Esophagus muscularis mucosa (tissue), 4 donors: ENCODE measurements at regions of chr7 and their contacts with region 1.

Region 1: DNA sequence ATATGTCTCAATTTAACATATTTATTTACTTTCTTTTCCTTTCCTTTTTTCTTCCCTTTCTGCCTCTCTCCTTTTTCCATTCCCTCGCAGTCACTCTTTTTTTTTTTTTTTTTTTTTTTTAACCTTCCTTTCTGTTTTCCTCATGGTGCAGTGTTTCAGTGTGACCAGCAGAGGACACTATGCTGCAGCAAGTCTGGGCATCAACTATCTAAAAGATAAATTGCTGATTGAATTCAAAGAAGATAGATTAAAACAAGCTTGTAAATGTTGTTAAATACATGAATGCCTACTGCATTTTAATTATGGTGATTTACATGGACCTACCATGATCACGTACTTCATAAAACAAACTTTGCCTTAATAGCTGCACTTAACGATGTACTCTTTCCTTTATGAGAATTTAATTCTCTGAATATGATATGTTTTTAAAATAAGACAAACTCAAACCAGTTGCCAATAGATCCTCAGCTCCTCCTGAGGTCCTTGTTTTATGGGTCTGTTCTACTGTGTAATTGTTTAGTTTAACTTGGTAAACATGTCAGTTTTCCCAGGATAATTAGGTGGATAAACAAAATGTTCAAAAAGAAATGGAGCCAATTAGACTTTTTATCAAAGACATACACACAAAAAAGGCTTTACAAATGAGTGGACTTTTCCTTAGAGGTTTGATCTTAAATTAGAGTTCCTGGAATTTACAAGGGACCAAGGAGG is 101.0 kb upstream of the AGR3 start:
- DNase-seq: no peak
- H3K4me3 ChIP-seq: peak overlapping the region in 1 of 4 donors; percentile 10
- H3K27ac ChIP-seq: no peak overlapping the region
- H3K4me1 ChIP-seq: peaks cover 0 to 13% (median 8%) of the 10 kb centered on the region in 4 donors
- H3K27me3 ChIP-seq: no peaks in the 10 kb centered on the region
- CTCF ChIP-seq: peak; percentile 79 to 93 (median 85)
- EP300 ChIP-seq: no peak
- POLR2A ChIP-seq: no peak

Region 2: GRCh38 chr7:17298207-17298839 is 315.5 kb after region 1 on chr7 and contains the start of gene AHR:
- intact Hi-C with region 1: loop called (anchors 5 kb)
- DNase-seq: peak; percentile 99
- H3K4me3 ChIP-seq: peak within 1 kb of the TSS; percentile 90 to 98 (median 93)
- H3K27ac ChIP-seq: peak within 1 kb of the TSS; percentile 92 to 97 (median 94)
- H3K4me1 ChIP-seq: peaks cover 11 to 27% (median 19%) of the 10 kb centered on the region in 4 donors
- H3K27me3 ChIP-seq: peaks cover 0 to 4% (median 0%) of the 10 kb centered on the region in 4 donors
- CTCF ChIP-seq: no peak
- EP300 ChIP-seq: no peak
- POLR2A ChIP-seq: peak; percentile 87
- total RNA-seq, gene AHR: 67.3 to 111 (median 77.8) TPM

Region 3: GRCh38 chr7:17530741-17531417 is 548.1 kb after region 1 on chr7:
- intact Hi-C with region 1: loop called (anchors 5 kb)
- DNase-seq: no peak
- H3K4me3 ChIP-seq: no peak overlapping the region
- H3K27ac ChIP-seq: no peak overlapping the region
- H3K4me1 ChIP-seq: peaks cover 0 to 4% (median 2%) of the 10 kb centered on the region in 4 donors
- H3K27me3 ChIP-seq: no peaks in the 10 kb centered on the region
- CTCF ChIP-seq: peak; percentile 14 to 40 (median 21)
- EP300 ChIP-seq: no peak
- POLR2A ChIP-seq: no peak

Region 4: DNA sequence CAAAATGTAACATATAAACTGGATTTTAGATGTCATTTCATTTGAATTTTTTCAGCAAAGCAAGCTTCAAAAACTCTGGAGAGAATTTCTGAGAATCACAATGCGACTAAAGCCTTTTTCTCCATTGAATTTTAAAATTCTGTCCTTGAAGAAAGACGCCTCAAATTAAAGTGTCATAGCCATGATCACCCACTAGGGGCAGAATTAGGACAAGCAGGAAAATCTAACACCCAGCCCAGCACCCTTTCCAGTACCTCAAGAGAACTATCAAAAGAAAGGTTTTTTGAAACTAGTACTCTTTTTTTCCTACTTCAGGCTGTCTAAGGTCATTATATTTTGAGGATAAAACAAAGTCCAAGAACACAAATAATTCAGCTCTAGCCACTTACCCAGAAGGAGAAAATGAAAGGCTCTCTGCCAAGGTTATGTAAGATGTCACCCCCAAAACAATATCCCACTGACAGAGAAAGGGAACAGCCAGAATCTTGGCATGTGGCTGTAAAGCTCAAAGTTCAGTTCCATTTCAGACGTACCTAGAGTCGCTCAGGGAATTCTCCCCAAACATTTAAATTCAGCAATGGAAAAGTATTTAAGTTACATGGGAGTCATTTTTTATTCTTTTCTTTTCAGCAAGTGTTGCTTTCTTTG is 658.1 kb after region 1 on chr7:
- intact Hi-C with region 1: loop called (anchors 5 kb)
- DNase-seq: no peak
- H3K4me3 ChIP-seq: no peak overlapping the region
- H3K27ac ChIP-seq: no peak overlapping the region
- H3K4me1 ChIP-seq: peaks cover 0 to 6% (median 3%) of the 10 kb centered on the region in 4 donors
- H3K27me3 ChIP-seq: no peaks in the 10 kb centered on the region
- CTCF ChIP-seq: peak; percentile 42 to 67 (median 51)
- EP300 ChIP-seq: no peak
- POLR2A ChIP-seq: no peak